ENCODE measurements at regions of chr5 and their contacts with region 1.

Region 1: GRCh38 chr5:126536874-126537273 is 58.1 kb downstream of the ALDH7A1 start:
- DNase-seq: no peak
- ATAC-seq: no peak
- H3K4me3 ChIP-seq: no peak overlapping the region
- H3K4me3 Mint-ChIP-seq: no peak overlapping the region
- H3K27ac ChIP-seq: no peak overlapping the region
- H3K27ac Mint-ChIP-seq: no peak overlapping the region
- H3K4me1 ChIP-seq: no peaks in the 10 kb centered on the region
- H3K4me1 Mint-ChIP-seq: peaks cover 0 to 9% (median 0%) of the 10 kb centered on the region in 7 donors
- H3K27me3 ChIP-seq: no peaks in the 10 kb centered on the region
- H3K27me3 Mint-ChIP-seq: peaks cover 0 to 6% (median 0%) of the 10 kb centered on the region in 5 donors

Region 2: DNA sequence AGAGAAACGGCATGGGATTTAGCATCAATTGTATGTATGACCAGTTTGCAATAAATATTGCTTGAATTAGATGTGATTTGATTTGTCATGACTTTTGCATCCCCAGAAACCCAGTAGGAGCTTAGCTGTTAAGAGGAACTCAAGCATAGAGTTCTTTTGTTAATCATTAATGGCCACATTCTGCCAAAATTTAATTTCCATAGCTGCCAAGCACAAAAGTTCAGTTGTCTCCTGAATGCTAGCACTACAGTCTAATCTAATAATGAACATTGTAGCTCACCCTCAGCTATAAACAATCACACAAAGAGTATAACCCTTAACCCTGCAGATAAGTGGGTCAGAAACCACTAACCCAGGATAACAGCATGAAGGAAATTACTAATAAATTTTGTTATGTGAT is 283.5 kb before region 1 on chr5:
- CTCF ChIA-PET with region 1: no interaction called
- POLR2A ChIA-PET with region 1: no interaction called
- intact Hi-C with region 1: no loop called
- DNase-seq: no peak
- ATAC-seq: no peak
- H3K4me3 ChIP-seq: no peak overlapping the region
- H3K4me3 Mint-ChIP-seq: no peak overlapping the region
- H3K27ac ChIP-seq: no peak overlapping the region
- H3K27ac Mint-ChIP-seq: no peak overlapping the region
- H3K4me1 ChIP-seq: no peaks in the 10 kb centered on the region
- H3K4me1 Mint-ChIP-seq: no peaks in the 10 kb centered on the region
- H3K27me3 ChIP-seq: no peaks in the 10 kb centered on the region
- H3K27me3 Mint-ChIP-seq: peaks cover 0 to 6% (median 3%) of the 10 kb centered on the region in 5 donors

Region 3: GRCh38 chr5:126354012-126354857 is 182.6 kb before region 1 on chr5:
- CTCF ChIA-PET with region 1: interaction called, 48 read pairs
- POLR2A ChIA-PET with region 1: no interaction called
- intact Hi-C with region 1: loop called (anchors 1 kb)
- DNase-seq: peak in 7 of 9 donors; percentile 26 to 66 (median 53)
- ATAC-seq: peak; percentile 78
- H3K4me3 ChIP-seq: no peak overlapping the region
- H3K4me3 Mint-ChIP-seq: peak overlapping the region; percentile 12 to 80 (median 72)
- H3K27ac ChIP-seq: no peak overlapping the region
- H3K27ac Mint-ChIP-seq: peak overlapping the region in 7 of 9 donors; percentile 19 to 65 (median 36)
- H3K4me1 ChIP-seq: peaks cover 0 to 12% of the 10 kb centered on the region in 2 donors
- H3K4me1 Mint-ChIP-seq: peaks cover 3 to 21% (median 15%) of the 10 kb centered on the region in 7 donors
- H3K27me3 ChIP-seq: no peaks in the 10 kb centered on the region
- H3K27me3 Mint-ChIP-seq: peaks cover 0 to 16% (median 0%) of the 10 kb centered on the region in 5 donors

Region 4: DNA sequence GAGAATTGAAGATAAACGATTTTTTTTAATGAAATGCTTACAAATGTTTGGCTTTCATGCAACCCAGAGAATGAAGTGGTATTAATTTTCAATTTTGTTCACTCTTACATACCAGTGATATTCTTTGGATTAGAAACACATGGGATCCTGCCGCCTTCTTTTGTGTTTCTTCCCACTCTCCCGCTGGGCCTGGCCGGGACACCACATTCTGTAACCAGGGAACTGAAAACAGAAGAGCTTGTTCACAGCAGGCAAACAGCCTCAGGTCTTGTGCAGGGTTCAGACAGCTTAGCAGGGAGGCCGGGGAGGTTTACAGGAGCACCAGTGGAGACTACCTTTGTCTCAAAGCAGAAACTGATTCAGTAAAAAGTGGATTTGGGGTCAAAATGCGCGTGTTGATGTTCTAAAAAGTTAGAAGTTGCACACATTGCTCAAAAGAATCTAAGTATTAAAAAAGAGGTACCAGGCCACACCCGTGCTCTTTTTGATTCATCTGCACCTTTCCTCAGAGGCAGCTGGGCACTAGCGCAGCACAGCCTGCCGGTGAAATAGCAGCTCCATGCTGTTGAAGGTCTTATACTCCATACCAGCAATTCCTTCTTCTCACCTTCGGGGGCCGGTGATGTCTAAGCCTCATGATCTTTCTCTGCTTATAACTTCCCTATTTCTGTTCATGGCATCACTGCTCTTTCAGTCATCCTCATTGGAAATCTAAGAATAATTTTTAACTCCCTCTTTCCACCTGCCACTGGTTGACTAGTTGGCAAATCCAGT is 46.5 kb before region 1 on chr5:
- CTCF ChIA-PET with region 1: interaction called, 3 read pairs
- POLR2A ChIA-PET with region 1: no interaction called
- intact Hi-C with region 1: loop called (anchors 2 kb)
- DNase-seq: no peak
- ATAC-seq: no peak
- H3K4me3 ChIP-seq: no peak overlapping the region
- H3K4me3 Mint-ChIP-seq: no peak overlapping the region
- H3K27ac ChIP-seq: no peak overlapping the region
- H3K27ac Mint-ChIP-seq: peak overlapping the region in 7 of 9 donors; percentile 2 to 91 (median 38)
- H3K4me1 ChIP-seq: no peaks in the 10 kb centered on the region
- H3K4me1 Mint-ChIP-seq: peaks cover 0 to 10% (median 0%) of the 10 kb centered on the region in 7 donors
- H3K27me3 ChIP-seq: no peaks in the 10 kb centered on the region
- H3K27me3 Mint-ChIP-seq: no peaks in the 10 kb centered on the region

Region 5: GRCh38 chr5:126499853-126500342 is 37.0 kb before region 1 on chr5:
- CTCF ChIA-PET with region 1: interaction called, 20 read pairs
- POLR2A ChIA-PET with region 1: no interaction called
- intact Hi-C with region 1: loop called (anchors 1 kb)
- DNase-seq: peak in 7 of 9 donors; percentile 36 to 84 (median 78)
- ATAC-seq: peak; percentile 88
- H3K4me3 ChIP-seq: no peak overlapping the region
- H3K4me3 Mint-ChIP-seq: peak overlapping the region in 5 of 10 donors; percentile 10 to 54 (median 24)
- H3K27ac ChIP-seq: no peak overlapping the region
- H3K27ac Mint-ChIP-seq: peak overlapping the region in 8 of 9 donors; percentile 22 to 88 (median 76)
- H3K4me1 ChIP-seq: peaks cover 0 to 25% of the 10 kb centered on the region in 2 donors
- H3K4me1 Mint-ChIP-seq: peaks cover 4 to 58% (median 44%) of the 10 kb centered on the region in 7 donors
- H3K27me3 ChIP-seq: no peaks in the 10 kb centered on the region
- H3K27me3 Mint-ChIP-seq: no peaks in the 10 kb centered on the region

Region 6: GRCh38 chr5:126508962-126509279 is 28.0 kb before region 1 on chr5:
- CTCF ChIA-PET with region 1: interaction called, 3 read pairs
- POLR2A ChIA-PET with region 1: no interaction called
- intact Hi-C with region 1: loop called in 1 of 2 experiments (anchors 2 kb)
- DNase-seq: peak in 6 of 9 donors; percentile 17 to 68 (median 49)
- ATAC-seq: peak; percentile 81
- H3K4me3 ChIP-seq: peak overlapping the region; percentile 11
- H3K4me3 Mint-ChIP-seq: peak overlapping the region; percentile 36 to 91 (median 83)
- H3K27ac ChIP-seq: peak overlapping the region; percentile 64
- H3K27ac Mint-ChIP-seq: peak overlapping the region; percentile 77 to 97 (median 93)
- H3K4me1 ChIP-seq: peaks cover 5 to 39% of the 10 kb centered on the region in 2 donors
- H3K4me1 Mint-ChIP-seq: peaks cover 11 to 75% (median 65%) of the 10 kb centered on the region in 7 donors
- H3K27me3 ChIP-seq: no peaks in the 10 kb centered on the region
- H3K27me3 Mint-ChIP-seq: no peaks in the 10 kb centered on the region